ENCODE measurements at regions of chr5 and their contacts with region 1.

Region 1: GRCh38 chr5:40904205-40904993 is 4.9 kb upstream of the C7 start:
- DNase-seq: peak; percentile 26
- H3K4me3 ChIP-seq: no peak overlapping the region
- CTCF ChIP-seq: peak; percentile 88

Region 2: GRCh38 chr5:41115281-41115680 is 210.9 kb after region 1 on chr5:
- CTCF ChIA-PET with region 1: interaction called, 11 read pairs
- POLR2A ChIA-PET with region 1: no interaction called
- DNase-seq: peak; percentile 60
- H3K4me3 ChIP-seq: no peak overlapping the region
- CTCF ChIP-seq: no peak

Region 3: GRCh38 chr5:41161271-41161670 is 256.9 kb after region 1 on chr5:
- CTCF ChIA-PET with region 1: no interaction called
- POLR2A ChIA-PET with region 1: no interaction called
- DNase-seq: peak; percentile 26
- H3K4me3 ChIP-seq: no peak overlapping the region
- CTCF ChIP-seq: no peak

Region 4: GRCh38 chr5:41270423-41271251 is 366.2 kb after region 1 on chr5:
- CTCF ChIA-PET with region 1: interaction called, 31 read pairs
- POLR2A ChIA-PET with region 1: no interaction called
- DNase-seq: no peak
- H3K4me3 ChIP-seq: no peak overlapping the region
- CTCF ChIP-seq: peak; percentile 73

Region 5: GRCh38 chr5:41346609-41347008 is 442.2 kb after region 1 on chr5:
- CTCF ChIA-PET with region 1: interaction called, 42 read pairs
- POLR2A ChIA-PET with region 1: no interaction called
- DNase-seq: no peak
- H3K4me3 ChIP-seq: no peak overlapping the region
- CTCF ChIP-seq: no peak

Region 6: GRCh38 chr5:41641621-41642020 is 737.2 kb after region 1 on chr5:
- CTCF ChIA-PET with region 1: interaction called, 42 read pairs
- POLR2A ChIA-PET with region 1: no interaction called
- DNase-seq: no peak
- H3K4me3 ChIP-seq: no peak overlapping the region
- CTCF ChIP-seq: no peak